CD4-positive, alpha-beta memory T cell (primary cell): ENCODE measurements at regions of chr14 and their contacts with region 1.

Region 1: GRCh38 chr14:106013879-106014376 is 487.5 kb downstream of the TMEM121 start:
- DNase-seq: peak; percentile 28 to 71 (median 56)
- H3K4me3 ChIP-seq: no peak overlapping the region
- H3K4me3 Mint-ChIP-seq: peak overlapping the region in 5 of 8 donors; percentile 2 to 45 (median 30)
- H3K27ac ChIP-seq: peak overlapping the region; percentile 35
- H3K27ac Mint-ChIP-seq: peak overlapping the region; percentile 81 to 95 (median 86)
- H3K4me1 ChIP-seq: peaks cover 16% of the 10 kb centered on the region
- H3K4me1 Mint-ChIP-seq: peaks cover 12 to 25% (median 21%) of the 10 kb centered on the region in 4 donors
- H3K27me3 ChIP-seq: no peaks in the 10 kb centered on the region
- H3K27me3 Mint-ChIP-seq: no peaks in the 10 kb centered on the region

Region 2: DNA sequence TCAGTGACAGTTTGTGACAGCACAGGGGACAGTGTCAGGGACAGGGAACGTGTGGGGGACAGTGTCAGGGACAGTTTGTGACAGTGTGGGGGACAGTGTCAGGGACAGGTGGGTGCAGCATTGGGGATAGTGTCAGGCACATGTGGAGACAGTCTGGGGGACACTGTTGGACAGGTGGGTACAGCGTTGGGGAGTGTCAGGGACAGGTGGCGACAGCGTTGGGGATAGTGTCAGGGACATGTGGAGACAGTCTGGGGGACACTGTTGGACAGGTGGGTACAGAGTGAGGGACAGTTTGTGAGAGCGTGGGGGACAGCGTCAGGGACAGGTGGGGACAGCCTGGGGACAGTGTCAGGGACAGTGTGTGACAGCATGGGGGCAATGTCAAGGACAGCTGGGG is 347.5 kb before region 1 on chr14:
- CTCF ChIA-PET with region 1: no interaction called
- POLR2A ChIA-PET with region 1: no interaction called
- intact Hi-C with region 1: loop called (anchors 5 kb)
- DNase-seq: no peak
- H3K4me3 ChIP-seq: no peak overlapping the region
- H3K4me3 Mint-ChIP-seq: no peak overlapping the region
- H3K27ac ChIP-seq: no peak overlapping the region
- H3K27ac Mint-ChIP-seq: no peak overlapping the region
- H3K4me1 ChIP-seq: no peaks in the 10 kb centered on the region
- H3K4me1 Mint-ChIP-seq: no peaks in the 10 kb centered on the region
- H3K27me3 ChIP-seq: no peaks in the 10 kb centered on the region
- H3K27me3 Mint-ChIP-seq: peaks cover 0 to 4% of the 10 kb centered on the region in 2 donors

Region 3: GRCh38 chr14:105974902-105975301 is 39.0 kb before region 1 on chr14:
- CTCF ChIA-PET with region 1: interaction called, 14 read pairs
- POLR2A ChIA-PET with region 1: no interaction called
- intact Hi-C with region 1: no loop called
- DNase-seq: peak; percentile 29 to 50 (median 38)
- H3K4me3 ChIP-seq: no peak overlapping the region
- H3K4me3 Mint-ChIP-seq: no peak overlapping the region
- H3K27ac ChIP-seq: no peak overlapping the region
- H3K27ac Mint-ChIP-seq: peak overlapping the region in 2 of 7 donors; percentile 25 to 26
- H3K4me1 ChIP-seq: no peaks in the 10 kb centered on the region
- H3K4me1 Mint-ChIP-seq: peaks cover 0 to 8% (median 5%) of the 10 kb centered on the region in 4 donors
- H3K27me3 ChIP-seq: peaks cover 9% of the 10 kb centered on the region
- H3K27me3 Mint-ChIP-seq: peaks cover 5 to 17% of the 10 kb centered on the region in 2 donors

Region 4: DNA sequence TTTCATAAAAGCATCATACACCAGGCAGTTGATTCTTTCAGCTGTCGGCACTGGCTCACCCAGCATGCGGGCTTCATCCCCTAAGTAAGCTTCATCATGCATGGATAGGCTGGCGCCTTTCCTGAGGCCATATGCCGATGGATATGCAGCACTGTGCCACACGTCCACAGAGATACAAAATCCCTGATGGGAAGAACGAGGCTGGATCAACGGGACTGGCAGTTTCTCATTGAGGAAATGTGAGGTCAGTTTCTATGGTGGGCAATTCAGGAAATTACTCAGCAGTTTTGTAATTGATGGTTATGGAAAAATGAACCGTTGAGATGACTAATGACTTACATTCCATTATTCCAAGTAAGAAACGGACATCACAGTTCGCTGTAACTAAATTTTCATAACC is 33.7 kb before region 1 on chr14:
- CTCF ChIA-PET with region 1: interaction called, 21 read pairs
- POLR2A ChIA-PET with region 1: no interaction called
- intact Hi-C with region 1: no loop called
- DNase-seq: no peak
- H3K4me3 ChIP-seq: no peak overlapping the region
- H3K4me3 Mint-ChIP-seq: no peak overlapping the region
- H3K27ac ChIP-seq: no peak overlapping the region
- H3K27ac Mint-ChIP-seq: peak overlapping the region in 1 of 7 donors; percentile 55
- H3K4me1 ChIP-seq: peaks cover 34% of the 10 kb centered on the region
- H3K4me1 Mint-ChIP-seq: peaks cover 35 to 52% (median 42%) of the 10 kb centered on the region in 4 donors
- H3K27me3 ChIP-seq: no peaks in the 10 kb centered on the region
- H3K27me3 Mint-ChIP-seq: no peaks in the 10 kb centered on the region

Region 5: DNA sequence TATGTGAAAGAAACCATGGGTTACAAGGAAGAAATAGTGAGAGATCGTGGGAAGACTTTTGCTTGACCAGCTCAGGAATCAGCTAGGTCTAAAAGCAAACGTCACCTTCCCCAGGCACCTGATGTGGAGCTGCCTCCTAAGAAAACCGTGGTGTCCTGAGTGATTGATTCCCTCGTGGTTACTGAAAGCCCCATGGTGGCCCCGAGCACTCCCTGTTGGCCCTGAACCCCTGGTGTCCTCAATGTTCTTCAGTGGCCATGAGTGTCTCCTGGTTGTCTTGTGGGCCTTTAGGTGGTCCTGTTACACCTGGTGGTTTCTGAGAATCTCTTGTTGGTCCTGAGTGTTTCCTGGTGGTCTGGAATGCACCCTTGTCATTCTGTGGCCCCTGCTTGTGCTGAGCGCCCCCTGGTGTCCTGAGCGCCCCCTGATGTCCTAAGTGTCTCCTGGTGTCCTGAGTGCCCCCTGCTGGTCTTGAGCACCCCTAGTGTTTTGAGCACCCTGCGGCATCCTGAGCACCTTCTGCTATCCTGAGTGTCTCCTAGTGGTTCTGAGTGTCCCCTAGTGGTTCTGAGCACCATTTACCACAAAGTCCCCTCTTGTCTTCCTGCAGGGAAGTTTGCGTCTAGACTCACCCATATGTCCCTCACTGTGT is 31.1 kb after region 1 on chr14:
- CTCF ChIA-PET with region 1: no interaction called
- POLR2A ChIA-PET with region 1: no interaction called
- intact Hi-C with region 1: loop called (anchors 5 kb)
- DNase-seq: peak; percentile 66 to 80 (median 69)
- H3K4me3 ChIP-seq: no peak overlapping the region
- H3K4me3 Mint-ChIP-seq: no peak overlapping the region
- H3K27ac ChIP-seq: no peak overlapping the region
- H3K27ac Mint-ChIP-seq: peak overlapping the region in 1 of 7 donors; percentile 45
- H3K4me1 ChIP-seq: no peaks in the 10 kb centered on the region
- H3K4me1 Mint-ChIP-seq: peaks cover 0 to 3% (median under 1%) of the 10 kb centered on the region in 4 donors
- H3K27me3 ChIP-seq: no peaks in the 10 kb centered on the region
- H3K27me3 Mint-ChIP-seq: peaks cover 4 to 17% of the 10 kb centered on the region in 2 donors

Region 6: GRCh38 chr14:106107703-106108102 is 93.8 kb after region 1 on chr14:
- CTCF ChIA-PET with region 1: no interaction called
- POLR2A ChIA-PET with region 1: no interaction called
- intact Hi-C with region 1: no loop called
- DNase-seq: no peak
- H3K4me3 ChIP-seq: no peak overlapping the region
- H3K4me3 Mint-ChIP-seq: no peak overlapping the region
- H3K27ac ChIP-seq: no peak overlapping the region
- H3K27ac Mint-ChIP-seq: no peak overlapping the region
- H3K4me1 ChIP-seq: no peaks in the 10 kb centered on the region
- H3K4me1 Mint-ChIP-seq: no peaks in the 10 kb centered on the region
- H3K27me3 ChIP-seq: no peaks in the 10 kb centered on the region
- H3K27me3 Mint-ChIP-seq: peaks cover 11 to 16% of the 10 kb centered on the region in 2 donors